Mammary epithelial cell (primary cell): ENCODE measurements at regions of chr9 and their contacts with region 1.

Region 1: GRCh38 chr9:6566409-6567139 is 79.0 kb downstream of the GLDC start:
- DNase-seq: peak; percentile 99
- H3K4me3 ChIP-seq: peak overlapping the region; percentile 42 to 45 (median 44)
- H3K27ac ChIP-seq: peak overlapping the region; percentile 100
- H3K4me1 ChIP-seq: peaks cover 39% of the 10 kb centered on the region
- H3K27me3 ChIP-seq: no peaks in the 10 kb centered on the region
- CTCF ChIP-seq: peak in 1 of 2 donors; percentile 20

Region 2: DNA sequence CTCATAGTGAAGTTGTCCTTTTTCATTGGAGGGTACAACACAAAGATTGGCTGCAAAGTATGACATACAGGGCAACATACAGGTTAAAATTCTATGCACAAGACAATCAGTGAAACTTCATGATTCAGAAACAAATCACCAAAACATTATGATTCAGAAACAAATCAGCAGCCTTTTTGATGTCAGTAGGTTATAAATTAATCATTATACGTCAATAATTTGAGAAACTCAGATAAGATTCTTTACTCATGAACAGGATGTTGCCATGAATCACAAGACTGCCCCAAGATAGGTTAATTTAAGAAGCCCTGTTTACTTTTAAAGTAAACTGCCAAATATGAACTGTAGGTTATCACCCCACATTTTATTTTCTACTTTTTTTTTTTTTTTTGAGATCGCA is 413.1 kb before region 1 on chr9:
- CTCF ChIA-PET with region 1: no interaction called
- dilution Hi-C with region 1: no loop called
- in situ Hi-C with region 1: no loop called
- intact Hi-C with region 1: loop called (anchors 5 kb)
- DNase-seq: peak; percentile 81
- H3K4me3 ChIP-seq: no peak overlapping the region
- H3K27ac ChIP-seq: peak overlapping the region; percentile 42
- H3K4me1 ChIP-seq: peaks cover 15% of the 10 kb centered on the region
- H3K27me3 ChIP-seq: no peaks in the 10 kb centered on the region
- CTCF ChIP-seq: no peak

Region 3: GRCh38 chr9:6412487-6413364 is 153.8 kb before region 1 on chr9 and contains the start of gene UHRF2:
- CTCF ChIA-PET with region 1: no interaction called
- dilution Hi-C with region 1: no loop called
- in situ Hi-C with region 1: no loop called
- intact Hi-C with region 1: loop called (anchors 1 kb)
- DNase-seq: peak; percentile 98
- H3K4me3 ChIP-seq: peak within 1 kb of the TSS; percentile 82 to 95 (median 84)
- H3K27ac ChIP-seq: peak within 1 kb of the TSS; percentile 75
- H3K4me1 ChIP-seq: peaks cover 19% of the 10 kb centered on the region
- H3K27me3 ChIP-seq: no peaks in the 10 kb centered on the region
- CTCF ChIP-seq: peak in 1 of 2 donors; percentile 4
- total RNA-seq, gene UHRF2: 45.5 to 72.0 TPM

Region 4: DNA sequence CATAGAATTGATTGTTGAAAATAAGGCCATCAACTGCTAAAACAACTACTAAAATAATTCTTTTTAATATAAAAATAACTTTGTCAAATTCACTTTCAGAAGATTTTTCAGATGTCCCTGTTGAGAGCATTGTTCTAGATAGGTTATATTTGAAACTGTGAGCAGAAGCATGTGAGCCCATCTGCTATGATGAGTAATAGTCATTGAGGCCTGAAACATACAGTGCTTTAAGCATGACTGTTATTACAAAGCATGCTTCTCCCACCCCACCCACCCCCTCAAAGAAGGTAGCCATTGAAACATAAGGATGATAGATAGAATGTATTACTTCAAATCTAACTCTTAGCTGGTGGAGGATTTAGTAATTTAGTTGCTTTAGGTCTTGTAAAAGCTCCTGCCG is 67.6 kb before region 1 on chr9:
- CTCF ChIA-PET with region 1: no interaction called
- dilution Hi-C with region 1: no loop called
- in situ Hi-C with region 1: no loop called
- intact Hi-C with region 1: loop called (anchors 2 kb)
- DNase-seq: peak; percentile 60
- H3K4me3 ChIP-seq: no peak overlapping the region
- H3K27ac ChIP-seq: peak overlapping the region; percentile 58
- H3K4me1 ChIP-seq: no peaks in the 10 kb centered on the region
- H3K27me3 ChIP-seq: no peaks in the 10 kb centered on the region
- CTCF ChIP-seq: no peak

Region 5: DNA sequence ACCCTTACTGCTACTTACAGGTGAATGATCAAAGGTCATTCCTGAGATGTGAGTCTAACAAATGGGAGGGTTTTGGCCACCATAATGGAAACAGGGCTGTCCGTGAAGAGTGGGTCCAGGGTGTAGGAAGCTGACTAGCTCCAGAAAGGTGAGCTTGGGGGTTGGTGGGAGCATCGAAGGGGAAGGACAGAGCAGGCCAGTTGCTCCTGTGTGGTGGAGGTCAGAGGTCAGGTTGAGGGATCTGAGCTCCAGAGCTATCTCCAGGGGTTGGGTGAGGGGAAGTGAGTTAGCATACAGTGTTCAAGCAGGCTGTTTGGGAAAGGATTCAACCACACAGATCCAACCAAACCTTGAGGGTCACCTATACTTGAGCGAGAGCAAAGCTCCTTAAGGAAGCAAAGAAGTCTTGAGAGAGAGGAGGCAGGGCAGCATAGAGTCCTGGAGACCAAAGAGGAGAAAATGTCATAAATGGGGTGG is 97.7 kb after region 1 on chr9:
- CTCF ChIA-PET with region 1: no interaction called
- dilution Hi-C with region 1: no loop called
- in situ Hi-C with region 1: no loop called
- intact Hi-C with region 1: no loop called
- DNase-seq: no peak
- H3K4me3 ChIP-seq: no peak overlapping the region
- H3K27ac ChIP-seq: no peak overlapping the region
- H3K4me1 ChIP-seq: no peaks in the 10 kb centered on the region
- H3K27me3 ChIP-seq: no peaks in the 10 kb centered on the region
- CTCF ChIP-seq: no peak